ENCODE measurements at regions of chr12 and their contacts with region 1.

Region 1: GRCh38 chr12:64494998-64495729 is 43.2 kb downstream of the TBK1 start:
- DNase-seq: no peak
- H3K4me3 ChIP-seq: no peak overlapping the region
- H3K27ac ChIP-seq: no peak overlapping the region
- H3K4me1 ChIP-seq: no peaks in the 10 kb centered on the region
- H3K27me3 ChIP-seq: no peaks in the 10 kb centered on the region
- CTCF ChIP-seq: no peak
- EP300 ChIP-seq: no peak
- POLR2A ChIP-seq: no peak

Region 2: DNA sequence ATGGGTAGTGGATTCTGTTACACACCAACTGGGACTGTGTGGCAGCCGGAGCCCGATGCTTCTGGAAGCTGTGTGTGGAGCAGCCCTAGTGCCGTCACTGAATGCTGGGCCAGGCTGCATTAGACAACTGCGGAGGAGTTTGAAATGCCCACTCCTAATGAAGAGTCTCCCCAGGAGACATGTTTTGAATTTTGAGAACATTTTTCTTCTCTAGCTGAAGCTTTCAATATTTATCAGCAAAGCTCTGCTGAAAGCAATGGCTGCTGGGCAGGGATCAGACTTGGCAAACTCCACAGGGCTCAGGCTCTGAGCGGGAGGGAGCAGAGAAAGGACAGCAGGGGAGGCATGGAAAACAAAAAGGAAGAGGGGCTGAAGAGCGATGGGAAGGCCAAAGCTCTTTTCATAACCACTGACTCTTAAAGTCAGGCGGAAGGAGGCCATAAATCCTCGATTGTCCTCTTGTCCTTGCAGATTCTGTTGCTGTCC is 1839.5 kb before region 1 on chr12:
- intact Hi-C with region 1: no loop called
- DNase-seq: no peak
- H3K4me3 ChIP-seq: no peak overlapping the region
- H3K27ac ChIP-seq: no peak overlapping the region
- H3K4me1 ChIP-seq: no peaks in the 10 kb centered on the region
- H3K27me3 ChIP-seq: no peaks in the 10 kb centered on the region
- CTCF ChIP-seq: no peak
- EP300 ChIP-seq: no peak
- POLR2A ChIP-seq: no peak

Region 3: DNA sequence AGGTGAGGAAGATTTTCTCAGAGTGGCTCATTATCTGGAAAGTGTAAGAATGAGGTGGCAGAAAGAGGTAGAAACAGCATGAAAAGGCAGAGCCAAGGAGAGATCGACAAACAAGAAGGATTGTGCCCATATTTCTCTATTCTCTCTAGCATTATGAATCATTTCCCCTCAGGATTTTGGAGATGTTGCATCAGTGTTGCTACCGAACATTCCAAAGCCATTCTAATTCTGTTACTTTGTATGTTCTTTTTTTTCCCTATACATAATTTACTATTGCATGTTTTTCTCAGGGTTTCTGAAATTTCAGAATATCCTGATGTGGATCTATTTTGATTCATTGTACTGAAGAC is 334.5 kb before region 1 on chr12:
- intact Hi-C with region 1: no loop called
- DNase-seq: no peak
- H3K4me3 ChIP-seq: no peak overlapping the region
- H3K27ac ChIP-seq: no peak overlapping the region
- H3K4me1 ChIP-seq: no peaks in the 10 kb centered on the region
- H3K27me3 ChIP-seq: no peaks in the 10 kb centered on the region
- CTCF ChIP-seq: no peak
- EP300 ChIP-seq: no peak
- POLR2A ChIP-seq: no peak

Region 4: DNA sequence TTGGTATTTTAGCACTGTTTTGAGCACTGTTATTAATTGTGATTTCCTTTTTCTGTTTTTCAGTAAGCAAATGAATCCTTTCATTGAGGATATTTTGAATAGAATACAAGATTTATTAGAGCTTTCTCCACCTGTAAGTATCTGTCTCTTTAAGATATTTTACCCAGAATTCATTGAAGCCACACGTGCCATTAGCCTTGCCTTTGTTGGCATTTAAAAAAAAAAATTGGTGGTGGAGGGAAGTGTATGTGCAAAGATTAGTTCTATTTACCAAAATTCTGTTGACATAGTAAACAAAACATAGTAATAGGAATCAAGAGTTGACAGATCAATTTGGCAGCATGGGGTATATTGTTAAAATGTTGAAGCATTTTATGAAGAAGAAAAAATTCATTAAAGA is 67.2 kb before region 1 on chr12:
- intact Hi-C with region 1: loop called (anchors 5 kb)
- DNase-seq: no peak
- H3K4me3 ChIP-seq: no peak overlapping the region
- H3K27ac ChIP-seq: no peak overlapping the region
- H3K4me1 ChIP-seq: no peaks in the 10 kb centered on the region
- H3K27me3 ChIP-seq: no peaks in the 10 kb centered on the region
- CTCF ChIP-seq: no peak
- EP300 ChIP-seq: no peak
- POLR2A ChIP-seq: no peak

Region 5: DNA sequence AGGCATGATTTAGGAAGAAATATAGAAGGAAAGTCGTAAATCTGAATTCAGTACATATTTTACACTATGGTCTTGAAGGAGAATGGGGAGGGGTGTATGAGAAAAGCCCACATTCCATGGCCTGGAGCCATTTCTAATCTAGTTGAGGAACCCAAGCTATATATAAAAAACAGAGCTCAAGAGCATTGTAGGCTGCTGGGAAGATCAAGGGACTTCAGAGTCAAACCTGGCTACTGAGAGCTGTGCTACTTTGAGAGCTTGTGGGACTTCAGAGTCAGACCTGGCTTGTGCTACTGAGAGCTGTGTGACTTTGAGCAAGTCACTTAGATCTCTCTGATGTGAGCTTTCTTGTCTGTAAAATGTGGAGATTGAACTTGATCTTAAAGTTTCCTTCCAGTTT is 15.5 kb after region 1 on chr12:
- intact Hi-C with region 1: no loop called
- DNase-seq: no peak
- H3K4me3 ChIP-seq: no peak overlapping the region
- H3K27ac ChIP-seq: no peak overlapping the region
- H3K4me1 ChIP-seq: no peaks in the 10 kb centered on the region
- H3K27me3 ChIP-seq: no peaks in the 10 kb centered on the region
- CTCF ChIP-seq: no peak
- EP300 ChIP-seq: no peak
- POLR2A ChIP-seq: no peak

Region 6: DNA sequence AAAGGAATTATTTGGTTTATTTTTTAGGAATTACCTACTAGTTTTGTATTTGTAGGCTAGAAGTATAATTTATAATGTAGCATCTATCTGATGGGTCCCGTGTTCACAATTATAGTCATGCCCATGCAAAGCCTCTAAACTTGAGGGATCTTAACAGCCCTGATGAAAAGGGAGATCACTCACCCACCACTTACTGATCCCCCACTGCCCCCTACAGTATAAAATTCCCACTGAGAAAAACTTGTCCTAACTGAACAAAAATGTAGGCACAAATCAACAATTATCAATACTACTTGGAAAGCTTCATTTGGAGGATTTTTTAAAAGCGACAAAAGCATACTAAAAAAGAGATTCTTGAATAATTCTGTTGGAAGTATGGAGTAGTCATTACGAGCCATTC is 605.0 kb after region 1 on chr12:
- intact Hi-C with region 1: no loop called
- DNase-seq: no peak
- H3K4me3 ChIP-seq: no peak overlapping the region
- H3K27ac ChIP-seq: no peak overlapping the region
- H3K4me1 ChIP-seq: no peaks in the 10 kb centered on the region
- H3K27me3 ChIP-seq: no peaks in the 10 kb centered on the region
- CTCF ChIP-seq: no peak
- EP300 ChIP-seq: no peak
- POLR2A ChIP-seq: no peak